Panc1 (cell line): ENCODE measurements at regions of chr18 and their contacts with region 1.

Region 1: GRCh38 chr18:26468931-26469340 is 79.4 kb downstream of the KCTD1 start:
- DNase-seq: no peak
- ATAC-seq: peak; percentile 87
- H3K4me3 ChIP-seq: no peak overlapping the region
- H3K27ac ChIP-seq: no peak overlapping the region; the same call in 1 of the 2 replicates
- H3K4me1 ChIP-seq: 0 out of 2 replicates have a peak, but pooled peaks cover 4% of the 10 kb centered on the region
- H3K27me3 ChIP-seq: no peaks in the 10 kb centered on the region
- CTCF ChIP-seq: peak; percentile 79

Region 2: DNA sequence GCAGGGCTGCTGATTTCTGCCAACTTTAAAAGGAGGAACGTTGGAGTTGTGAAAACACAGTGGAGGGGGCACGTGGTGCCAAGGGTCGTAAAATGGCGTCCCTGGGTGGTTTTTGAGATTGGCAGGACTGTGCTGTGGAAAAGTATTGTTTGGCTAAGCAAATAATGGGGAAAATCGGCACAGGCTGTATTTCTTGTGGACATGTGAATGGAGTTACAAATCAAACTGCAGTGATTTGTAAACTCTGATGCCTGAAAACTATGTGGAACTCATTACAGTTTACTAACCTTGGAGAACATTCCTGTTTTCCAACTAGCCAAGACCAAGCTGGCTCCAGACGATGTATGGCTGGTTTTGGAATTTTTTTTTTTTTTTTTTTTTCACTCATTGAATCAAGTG is 10.7 kb after region 1 on chr18:
- CTCF ChIA-PET with region 1: interaction called, 12 read pairs
- POLR2A ChIA-PET with region 1: no interaction called
- in situ Hi-C with region 1: no loop called
- intact Hi-C with region 1: no loop called
- DNase-seq: no peak
- ATAC-seq: no peak
- H3K4me3 ChIP-seq: no peak overlapping the region
- H3K27ac ChIP-seq: peak overlapping the region; percentile 93
- H3K4me1 ChIP-seq: peaks cover 62% of the 10 kb centered on the region
- H3K27me3 ChIP-seq: no peaks in the 10 kb centered on the region
- CTCF ChIP-seq: no peak